PC-3 (cell line): ENCODE measurements at regions of chr3 and their contacts with region 1.

Region 1: GRCh38 chr3:119428538-119428937 is 34.9 kb downstream of the TMEM39A start:
- DNase-seq: no peak
- ATAC-seq: no peak
- H3K4me3 ChIP-seq: no peak overlapping the region
- H3K27ac ChIP-seq: no peak overlapping the region
- H3K4me1 ChIP-seq: no peaks in the 10 kb centered on the region
- H3K27me3 ChIP-seq: no peaks in the 10 kb centered on the region
- CTCF ChIP-seq: peak; percentile 51

Region 2: DNA sequence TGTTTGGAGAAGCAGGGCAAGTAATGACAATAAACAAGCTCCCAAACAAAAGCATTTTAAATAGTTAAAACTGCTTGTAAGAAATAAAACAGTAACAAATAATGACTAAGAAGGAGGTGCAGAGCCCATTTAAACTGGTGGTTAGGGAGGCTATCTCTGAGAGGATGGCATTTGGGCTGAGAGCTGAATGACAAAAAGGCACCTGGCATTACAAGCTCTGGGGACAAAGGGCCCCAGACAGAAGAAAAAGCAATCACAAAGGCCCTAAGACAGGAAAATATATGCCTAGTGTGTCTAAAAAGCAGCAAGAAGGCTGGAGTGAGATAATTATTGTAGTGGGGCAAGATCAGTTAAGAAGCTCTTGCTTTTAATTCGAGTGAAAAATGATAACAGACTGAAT is 25.3 kb after region 1 on chr3:
- CTCF ChIA-PET with region 1: no interaction called
- POLR2A ChIA-PET with region 1: no interaction called
- intact Hi-C with region 1: loop called (anchors 1 kb)
- DNase-seq: no peak
- ATAC-seq: no peak
- H3K4me3 ChIP-seq: no peak overlapping the region
- H3K27ac ChIP-seq: no peak overlapping the region
- H3K4me1 ChIP-seq: no peaks in the 10 kb centered on the region
- H3K27me3 ChIP-seq: no peaks in the 10 kb centered on the region
- CTCF ChIP-seq: no peak